ENCODE measurements at regions of chr9 and their contacts with region 1.

Region 1: GRCh38 chr9:16985559-16986348 is 115.3 kb upstream of the BNC2 start:
- DNase-seq: peak; percentile 80 to 96
- H3K4me3 ChIP-seq: no peak overlapping the region
- H3K27ac ChIP-seq: peak overlapping the region; percentile 86 to 90
- H3K4me1 ChIP-seq: peaks cover 0 to 18% of the 10 kb centered on the region in 2 donors
- H3K27me3 ChIP-seq: no peaks in the 10 kb centered on the region
- CTCF ChIP-seq: no peak

Region 2: GRCh38 chr9:16275795-16276624 is 709.7 kb before region 1 on chr9:
- intact Hi-C with region 1: loop called (anchors 10 kb)
- DNase-seq: peak in 1 of 2 donors; percentile 79
- H3K4me3 ChIP-seq: no peak overlapping the region
- H3K27ac ChIP-seq: no peak overlapping the region
- H3K4me1 ChIP-seq: peaks cover 0 to 11% of the 10 kb centered on the region in 2 donors
- H3K27me3 ChIP-seq: no peaks in the 10 kb centered on the region
- CTCF ChIP-seq: no peak

Region 3: GRCh38 chr9:16726718-16727451 is 258.9 kb before region 1 on chr9:
- intact Hi-C with region 1: loop called (anchors 5 kb)
- DNase-seq: peak in 1 of 2 donors; percentile 91
- H3K4me3 ChIP-seq: peak overlapping the region; percentile 69 to 76
- H3K27ac ChIP-seq: peak overlapping the region; percentile 92 to 95
- H3K4me1 ChIP-seq: peaks cover 0 to 2% of the 10 kb centered on the region in 2 donors
- H3K27me3 ChIP-seq: no peaks in the 10 kb centered on the region
- CTCF ChIP-seq: no peak

Region 4: GRCh38 chr9:17134396-17135294 is 148.9 kb after region 1 on chr9 and contains the start of gene CNTLN:
- intact Hi-C with region 1: loop called (anchors 5 kb)
- DNase-seq: peak; percentile 63 to 97
- H3K4me3 ChIP-seq: peak within 1 kb of the TSS; percentile 66 to 95
- H3K27ac ChIP-seq: peak within 1 kb of the TSS; percentile 78 to 86
- H3K4me1 ChIP-seq: peaks cover 0 to 3% of the 10 kb centered on the region in 2 donors
- H3K27me3 ChIP-seq: no peaks in the 10 kb centered on the region
- CTCF ChIP-seq: no peak
- total RNA-seq, gene CNTLN: 3.5 TPM

Region 5: GRCh38 chr9:17280350-17281012 is 294.7 kb after region 1 on chr9:
- intact Hi-C with region 1: no loop called
- DNase-seq: no peak
- H3K4me3 ChIP-seq: no peak overlapping the region
- H3K27ac ChIP-seq: no peak overlapping the region
- H3K4me1 ChIP-seq: no peaks in the 10 kb centered on the region
- H3K27me3 ChIP-seq: no peaks in the 10 kb centered on the region
- CTCF ChIP-seq: no peak

Region 6: GRCh38 chr9:17422994-17423680 is 437.4 kb after region 1 on chr9:
- intact Hi-C with region 1: no loop called
- DNase-seq: no peak
- H3K4me3 ChIP-seq: no peak overlapping the region
- H3K27ac ChIP-seq: no peak overlapping the region
- H3K4me1 ChIP-seq: no peaks in the 10 kb centered on the region
- H3K27me3 ChIP-seq: no peaks in the 10 kb centered on the region
- CTCF ChIP-seq: no peak

Measured in ascending aorta (tissue), 2 donors.